ENCODE measurements at regions of chr1 and their contacts with region 1.

Region 1: GRCh38 chr1:169546087-169546995 is 39.9 kb downstream of the F5 start:
- DNase-seq: peak; percentile 40
- ATAC-seq: peak; percentile 92
- H3K4me3 ChIP-seq: no peak overlapping the region
- H3K27ac ChIP-seq: no peak overlapping the region
- H3K4me1 ChIP-seq: no peaks in the 10 kb centered on the region
- H3K27me3 ChIP-seq: no peaks in the 10 kb centered on the region
- CTCF ChIP-seq: peak; percentile 63 to 69 (median 66)
- EP300 ChIP-seq: no peak
- POLR2A ChIP-seq: no peak
- RAD21 ChIP-seq: peak; percentile 75

Region 2: DNA sequence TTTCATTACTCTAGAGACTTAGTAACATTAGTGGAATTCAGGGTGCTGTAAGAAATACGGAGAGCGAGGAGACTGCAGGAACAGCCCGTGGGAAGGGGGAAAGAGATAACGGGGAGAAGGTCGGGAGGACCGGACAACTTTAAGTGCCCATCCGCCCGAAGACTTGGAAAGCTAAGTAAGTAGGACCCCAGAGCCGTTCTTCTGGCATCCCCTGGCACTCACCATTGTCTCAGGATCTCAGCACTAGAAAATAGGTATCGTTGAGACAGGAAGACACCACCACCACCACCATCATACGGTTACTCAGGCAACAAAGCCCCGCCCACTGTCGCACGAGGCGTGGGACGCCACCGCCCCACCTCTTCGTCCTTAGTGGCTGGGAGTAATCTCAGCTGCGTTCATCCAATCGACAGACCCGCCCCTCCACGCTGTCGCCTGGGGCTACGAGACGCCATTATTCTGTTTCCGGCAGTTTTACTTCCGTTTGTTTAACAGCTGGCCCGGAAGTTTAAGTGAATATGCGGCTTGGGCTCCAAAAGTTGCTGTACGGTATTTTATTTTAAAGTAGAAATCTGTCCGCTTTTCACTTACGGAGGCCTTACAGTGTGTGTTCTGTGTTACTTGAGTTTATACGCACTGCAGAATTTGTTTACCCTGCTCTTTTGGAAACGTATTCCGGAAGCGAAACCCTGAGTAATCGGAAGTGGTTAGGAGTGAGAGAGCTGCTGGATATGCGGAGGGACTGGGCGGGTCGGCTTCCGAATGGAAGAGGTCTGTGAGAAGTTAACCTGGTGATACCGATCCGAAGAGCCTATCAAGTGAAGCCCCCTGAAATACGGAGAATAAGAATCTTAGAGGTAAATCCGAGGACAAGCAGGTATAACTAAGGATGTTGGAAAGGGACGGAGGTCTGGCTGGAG is 178.6 kb before region 1 on chr1 and contains the starts of genes BLZF1 and NME7:
- CTCF ChIA-PET with region 1: interaction called, 6 read pairs
- POLR2A ChIA-PET with region 1: no interaction called
- RAD21 ChIA-PET with region 1: no interaction called
- SMC1A ChIA-PET with region 1: no interaction called
- in situ Hi-C with region 1: no loop called
- intact Hi-C with region 1: loop called (anchors 5 kb)
- DNase-seq: peak; percentile 94
- ATAC-seq: peak; percentile 98
- H3K4me3 ChIP-seq: peak within 1 kb of the TSS; percentile 93
- H3K27ac ChIP-seq: peak within 1 kb of the TSS; percentile 11
- H3K4me1 ChIP-seq: peaks cover 4% of the 10 kb centered on the region; the same call in 1 of the 2 replicates
- H3K27me3 ChIP-seq: no peaks in the 10 kb centered on the region
- CTCF ChIP-seq: no peak
- EP300 ChIP-seq: no peak
- POLR2A ChIP-seq: peak; percentile 11; the same call in 1 of the 2 replicates
- RAD21 ChIP-seq: no peak
- polyA plus RNA-seq, gene BLZF1: 6.4 to 9.4 TPM
- polyA plus RNA-seq, gene NME7: 8.0 to 8.1 TPM

Region 3: GRCh38 chr1:169414952-169415351 is 131.4 kb before region 1 on chr1:
- CTCF ChIA-PET with region 1: no interaction called
- POLR2A ChIA-PET with region 1: no interaction called
- RAD21 ChIA-PET with region 1: no interaction called
- SMC1A ChIA-PET with region 1: no interaction called
- in situ Hi-C with region 1: no loop called
- intact Hi-C with region 1: no loop called
- DNase-seq: no peak
- ATAC-seq: no peak
- H3K4me3 ChIP-seq: no peak overlapping the region
- H3K27ac ChIP-seq: no peak overlapping the region
- H3K4me1 ChIP-seq: no peaks in the 10 kb centered on the region
- H3K27me3 ChIP-seq: no peaks in the 10 kb centered on the region
- CTCF ChIP-seq: no peak
- EP300 ChIP-seq: no peak
- POLR2A ChIP-seq: no peak
- RAD21 ChIP-seq: no peak

Region 4: DNA sequence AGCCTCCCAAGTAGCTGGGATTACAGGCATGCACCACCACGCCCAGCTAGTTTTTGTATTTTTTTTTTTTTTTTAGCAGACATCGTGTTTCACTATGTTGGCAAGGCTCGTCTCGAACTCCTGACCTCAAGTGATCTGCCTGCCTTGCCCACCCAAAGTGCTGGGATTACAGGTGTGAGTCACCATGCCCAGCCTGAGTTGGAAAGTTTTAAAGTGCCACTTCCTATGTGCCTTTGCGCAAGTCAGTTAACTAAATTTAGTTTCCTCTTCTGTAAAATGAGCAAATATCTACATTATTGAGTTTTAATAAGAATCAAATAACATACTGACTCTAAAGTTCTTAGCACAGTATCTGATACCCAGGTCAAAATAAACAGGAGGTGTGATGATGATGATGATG is 73.0 kb before region 1 on chr1:
- CTCF ChIA-PET with region 1: interaction called, 7 read pairs
- POLR2A ChIA-PET with region 1: no interaction called
- RAD21 ChIA-PET with region 1: interaction called, 3 read pairs
- SMC1A ChIA-PET with region 1: no interaction called
- in situ Hi-C with region 1: loop called (anchors 5 kb)
- intact Hi-C with region 1: no loop called
- DNase-seq: no peak
- ATAC-seq: no peak
- H3K4me3 ChIP-seq: no peak overlapping the region
- H3K27ac ChIP-seq: no peak overlapping the region
- H3K4me1 ChIP-seq: no peaks in the 10 kb centered on the region
- H3K27me3 ChIP-seq: no peaks in the 10 kb centered on the region
- CTCF ChIP-seq: no peak
- EP300 ChIP-seq: no peak
- POLR2A ChIP-seq: no peak
- RAD21 ChIP-seq: no peak

Region 5: DNA sequence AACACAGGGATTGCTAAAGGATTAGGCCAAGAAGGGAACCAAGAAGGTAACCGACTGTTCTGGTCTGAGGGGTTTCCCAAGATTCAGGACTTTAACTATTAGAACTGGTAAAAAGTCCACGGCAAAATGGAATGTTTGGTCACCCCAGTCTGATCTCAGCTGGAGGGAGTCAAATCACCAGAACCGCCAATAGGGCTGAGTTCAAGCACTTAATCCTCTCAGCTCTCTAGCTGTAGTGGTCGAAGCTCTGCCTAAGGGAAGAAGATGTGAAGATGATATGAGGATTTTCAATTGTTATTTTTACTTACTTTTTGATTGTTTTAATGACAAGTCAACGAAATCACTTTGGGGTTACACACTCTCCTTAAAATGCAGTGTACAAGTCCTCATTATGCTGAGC is 10.8 kb after region 1 on chr1:
- CTCF ChIA-PET with region 1: interaction called, 11 read pairs
- POLR2A ChIA-PET with region 1: no interaction called
- RAD21 ChIA-PET with region 1: interaction called, 4 read pairs
- SMC1A ChIA-PET with region 1: interaction called, 5 read pairs
- in situ Hi-C with region 1: no loop called
- intact Hi-C with region 1: no loop called
- DNase-seq: no peak
- ATAC-seq: no peak
- H3K4me3 ChIP-seq: no peak overlapping the region
- H3K27ac ChIP-seq: no peak overlapping the region
- H3K4me1 ChIP-seq: no peaks in the 10 kb centered on the region
- H3K27me3 ChIP-seq: no peaks in the 10 kb centered on the region
- CTCF ChIP-seq: no peak
- EP300 ChIP-seq: no peak
- POLR2A ChIP-seq: no peak
- RAD21 ChIP-seq: no peak

Region 6: DNA sequence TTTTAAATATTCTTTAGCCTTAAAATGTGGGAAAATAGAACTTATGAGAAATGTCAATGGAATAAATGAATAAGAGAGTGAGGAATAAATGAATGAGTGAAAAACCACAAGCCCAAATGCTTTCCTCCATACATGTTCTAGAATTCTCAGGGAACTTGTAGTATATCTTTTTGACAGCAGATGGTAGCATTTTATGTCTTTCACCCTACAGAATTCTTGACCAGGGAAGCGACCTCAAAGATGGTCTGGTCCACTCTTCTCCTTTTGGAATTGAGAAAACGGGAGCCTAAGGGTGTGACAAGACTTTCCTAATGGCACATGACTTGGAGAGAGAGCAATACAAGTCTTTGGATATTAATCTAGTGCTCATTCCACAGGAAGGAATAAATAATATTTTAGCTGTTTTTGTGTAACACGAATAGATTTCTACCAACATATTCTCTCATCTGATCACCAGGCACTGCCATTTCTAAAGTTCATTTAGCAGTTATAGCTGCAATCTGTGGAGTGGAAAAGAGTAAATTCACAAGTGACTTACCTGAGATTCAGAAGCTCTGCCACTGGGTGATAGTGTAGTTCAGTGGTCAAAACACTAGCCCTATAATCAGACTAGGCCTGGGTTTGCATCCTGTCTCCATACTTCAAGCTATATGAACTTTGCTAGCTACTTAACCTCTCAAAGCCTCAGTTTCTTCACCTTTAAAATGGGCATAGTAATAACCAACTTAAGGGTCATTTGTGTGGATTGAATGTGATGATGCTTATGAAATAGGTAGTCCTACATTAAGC is 54.9 kb after region 1 on chr1:
- CTCF ChIA-PET with region 1: interaction called, 19 read pairs
- POLR2A ChIA-PET with region 1: no interaction called
- RAD21 ChIA-PET with region 1: interaction called, 10 read pairs
- SMC1A ChIA-PET with region 1: interaction called, 13 read pairs
- in situ Hi-C with region 1: no loop called
- intact Hi-C with region 1: loop called (anchors 1 kb)
- DNase-seq: peak; percentile 52
- ATAC-seq: peak; percentile 81
- H3K4me3 ChIP-seq: no peak overlapping the region
- H3K27ac ChIP-seq: no peak overlapping the region
- H3K4me1 ChIP-seq: peaks cover 10% of the 10 kb centered on the region
- H3K27me3 ChIP-seq: no peaks in the 10 kb centered on the region
- CTCF ChIP-seq: peak; percentile 42 to 73 (median 53); a peak in 5 of 6 replicates
- EP300 ChIP-seq: no peak
- POLR2A ChIP-seq: no peak
- RAD21 ChIP-seq: peak; percentile 87

Region 7: GRCh38 chr1:169676001-169676400 is 129.7 kb after region 1 on chr1:
- CTCF ChIA-PET with region 1: no interaction called
- POLR2A ChIA-PET with region 1: no interaction called
- RAD21 ChIA-PET with region 1: no interaction called
- SMC1A ChIA-PET with region 1: no interaction called
- in situ Hi-C with region 1: no loop called
- intact Hi-C with region 1: no loop called
- DNase-seq: no peak
- ATAC-seq: no peak
- H3K4me3 ChIP-seq: no peak overlapping the region
- H3K27ac ChIP-seq: no peak overlapping the region
- H3K4me1 ChIP-seq: peaks cover 24% of the 10 kb centered on the region
- H3K27me3 ChIP-seq: no peaks in the 10 kb centered on the region
- CTCF ChIP-seq: no peak
- EP300 ChIP-seq: no peak
- POLR2A ChIP-seq: no peak
- RAD21 ChIP-seq: no peak

Region 8: GRCh38 chr1:169809370-169810095 is 263.2 kb after region 1 on chr1:
- CTCF ChIA-PET with region 1: interaction called, 14 read pairs
- POLR2A ChIA-PET with region 1: no interaction called
- RAD21 ChIA-PET with region 1: interaction called, 3 read pairs
- SMC1A ChIA-PET with region 1: interaction called, 12 read pairs
- in situ Hi-C with region 1: no loop called
- intact Hi-C with region 1: loop called (anchors 1 kb)
- DNase-seq: no peak
- ATAC-seq: peak; percentile 77
- H3K4me3 ChIP-seq: no peak overlapping the region
- H3K27ac ChIP-seq: no peak overlapping the region
- H3K4me1 ChIP-seq: no peaks in the 10 kb centered on the region
- H3K27me3 ChIP-seq: no peaks in the 10 kb centered on the region
- CTCF ChIP-seq: peak; percentile 25 to 54 (median 51); a peak in 5 of 6 replicates
- EP300 ChIP-seq: no peak
- POLR2A ChIP-seq: no peak
- RAD21 ChIP-seq: peak; percentile 64

Measured in GM12878 (cell line).